ENCODE measurements at regions of chr1 and their contacts with region 1.

Region 1: DNA sequence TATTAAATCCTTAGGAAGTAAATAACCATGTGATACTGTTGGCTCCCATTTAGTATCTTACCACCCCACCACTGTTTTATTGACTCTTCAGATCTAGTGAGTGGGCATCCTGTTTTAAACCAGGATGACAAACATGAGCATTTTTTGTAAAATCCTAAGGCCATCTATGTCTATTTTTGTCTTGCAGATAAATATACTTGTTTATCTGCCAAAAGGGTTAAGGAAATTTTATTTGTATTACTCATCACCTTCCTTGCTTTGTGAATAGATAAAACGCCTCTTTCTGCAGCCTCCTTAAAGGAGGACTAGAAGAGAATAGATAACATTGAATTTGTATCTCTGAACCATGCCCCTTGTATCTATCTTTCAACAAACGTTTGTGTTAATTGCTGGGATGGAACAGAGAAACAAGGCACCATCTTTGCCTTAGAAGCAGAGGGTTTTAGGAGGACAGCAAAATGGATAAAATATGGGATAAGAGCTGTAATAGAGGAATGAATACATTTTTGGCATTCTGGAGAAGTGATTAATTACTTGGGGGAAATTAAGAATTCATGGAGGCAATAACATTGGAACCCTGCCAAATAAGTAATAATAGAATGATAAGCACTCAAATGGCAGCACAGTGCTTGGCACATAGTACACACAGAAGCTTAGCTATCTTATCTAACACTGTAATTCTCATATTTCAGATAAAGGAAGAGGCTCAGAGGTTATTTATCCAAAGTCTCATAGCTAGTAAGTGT is 14.7 kb downstream of the YTHDF2 start:
- DNase-seq: no peak
- ATAC-seq: no peak
- H3K4me3 ChIP-seq: no peak overlapping the region
- H3K4me3 Mint-ChIP-seq: no peak overlapping the region
- H3K27ac ChIP-seq: no peak overlapping the region
- H3K27ac Mint-ChIP-seq: no peak overlapping the region
- H3K4me1 ChIP-seq: peaks cover 23 to 33% of the 10 kb centered on the region in 2 donors
- H3K4me1 Mint-ChIP-seq: peaks cover 43% of the 10 kb centered on the region
- H3K27me3 ChIP-seq: no peaks in the 10 kb centered on the region
- H3K27me3 Mint-ChIP-seq: no peaks in the 10 kb centered on the region
- CTCF ChIP-seq: no peak

Region 2: GRCh38 chr1:28537457-28538199 is 213.9 kb before region 1 on chr1:
- CTCF ChIA-PET with region 1: no interaction called
- POLR2A ChIA-PET with region 1: no interaction called
- intact Hi-C with region 1: no loop called
- DNase-seq: no peak
- ATAC-seq: no peak
- H3K4me3 ChIP-seq: no peak overlapping the region
- H3K4me3 Mint-ChIP-seq: no peak overlapping the region
- H3K27ac ChIP-seq: no peak overlapping the region
- H3K27ac Mint-ChIP-seq: no peak overlapping the region
- H3K4me1 ChIP-seq: no peaks in the 10 kb centered on the region
- H3K4me1 Mint-ChIP-seq: no peaks in the 10 kb centered on the region
- H3K27me3 ChIP-seq: no peaks in the 10 kb centered on the region
- H3K27me3 Mint-ChIP-seq: no peaks in the 10 kb centered on the region
- CTCF ChIP-seq: no peak

Region 3: GRCh38 chr1:28668191-28668955 is 83.1 kb before region 1 on chr1 and contains the start of gene GMEB1:
- CTCF ChIA-PET with region 1: no interaction called
- POLR2A ChIA-PET with region 1: no interaction called
- intact Hi-C with region 1: no loop called
- DNase-seq: peak; percentile 88
- ATAC-seq: peak; percentile 65
- H3K4me3 ChIP-seq: peak within 1 kb of the TSS; percentile 68 to 95 (median 94)
- H3K4me3 Mint-ChIP-seq: peak within 1 kb of the TSS; percentile 94
- H3K27ac ChIP-seq: peak within 1 kb of the TSS; percentile 95 to 98
- H3K27ac Mint-ChIP-seq: peak within 1 kb of the TSS; percentile 99
- H3K4me1 ChIP-seq: peaks cover 5 to 24% of the 10 kb centered on the region in 2 donors
- H3K4me1 Mint-ChIP-seq: peaks cover 19% of the 10 kb centered on the region
- H3K27me3 ChIP-seq: no peaks in the 10 kb centered on the region
- H3K27me3 Mint-ChIP-seq: no peaks in the 10 kb centered on the region
- CTCF ChIP-seq: no peak
- total RNA-seq, gene GMEB1: 21.7 and 24.8 TPM in 2 replicates

Region 4: DNA sequence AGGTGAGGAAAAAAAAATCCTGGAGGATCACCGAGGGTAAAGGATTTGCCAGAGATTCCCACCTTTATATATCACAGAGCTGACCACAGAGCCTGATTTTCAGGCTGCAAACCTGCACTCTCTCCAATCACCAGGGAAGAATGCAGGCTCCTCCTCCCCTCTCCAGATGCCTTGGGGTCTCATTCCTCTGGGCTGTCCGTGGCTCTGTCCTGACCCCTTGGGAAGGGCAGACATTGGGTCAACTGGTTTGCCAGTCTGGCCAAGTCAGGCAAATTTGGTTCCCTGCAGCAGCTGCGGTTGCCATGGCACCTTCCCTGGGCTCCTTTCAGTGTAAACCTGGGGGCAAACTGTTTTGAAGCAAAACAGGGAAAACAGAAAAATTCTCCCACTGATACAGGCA is 48.8 kb after region 1 on chr1:
- CTCF ChIA-PET with region 1: no interaction called
- POLR2A ChIA-PET with region 1: interaction called, 15 read pairs
- intact Hi-C with region 1: no loop called
- DNase-seq: no peak
- ATAC-seq: no peak
- H3K4me3 ChIP-seq: no peak overlapping the region
- H3K4me3 Mint-ChIP-seq: no peak overlapping the region
- H3K27ac ChIP-seq: no peak overlapping the region
- H3K27ac Mint-ChIP-seq: no peak overlapping the region
- H3K4me1 ChIP-seq: no peaks in the 10 kb centered on the region
- H3K4me1 Mint-ChIP-seq: no peaks in the 10 kb centered on the region
- H3K27me3 ChIP-seq: no peaks in the 10 kb centered on the region
- H3K27me3 Mint-ChIP-seq: peaks cover 19% of the 10 kb centered on the region
- CTCF ChIP-seq: no peak

Region 5: DNA sequence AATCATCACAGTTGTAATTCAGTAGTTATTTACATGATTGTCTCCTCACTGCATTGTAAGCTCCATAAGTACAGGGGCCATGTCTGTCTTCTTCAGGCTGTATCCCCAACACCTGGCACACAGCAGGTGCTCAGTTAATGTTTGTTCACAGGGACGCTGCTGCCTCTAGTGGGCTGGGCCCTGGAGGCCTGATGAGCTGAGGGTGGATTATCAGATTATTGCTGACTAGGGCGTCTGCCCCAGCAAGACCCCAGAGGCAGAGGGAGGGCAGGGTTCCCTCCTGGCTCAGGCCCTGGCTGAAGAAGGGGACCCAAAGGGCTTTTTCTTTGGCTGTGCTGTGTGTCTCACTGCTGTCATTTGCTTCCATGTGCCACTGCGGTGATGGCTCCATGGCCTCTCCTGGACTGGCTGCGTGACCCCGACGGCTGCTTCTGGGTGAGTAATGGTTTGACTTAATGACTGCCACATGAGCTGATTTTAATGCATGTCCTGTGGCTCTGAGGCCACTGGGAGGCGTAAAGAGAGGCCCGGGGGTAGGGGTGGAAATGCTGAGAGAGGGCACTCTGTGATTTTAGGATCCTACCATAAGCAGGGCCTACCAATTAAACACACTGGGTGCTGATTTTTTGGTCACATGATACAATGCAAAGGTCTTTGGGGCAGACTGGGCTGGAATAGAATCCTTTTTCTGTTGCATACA is 142.1 kb after region 1 on chr1:
- CTCF ChIA-PET with region 1: no interaction called
- POLR2A ChIA-PET with region 1: no interaction called
- intact Hi-C with region 1: no loop called
- DNase-seq: peak; percentile 36
- ATAC-seq: peak; percentile 49
- H3K4me3 ChIP-seq: no peak overlapping the region
- H3K4me3 Mint-ChIP-seq: no peak overlapping the region
- H3K27ac ChIP-seq: no peak overlapping the region
- H3K27ac Mint-ChIP-seq: peak overlapping the region; percentile 56
- H3K4me1 ChIP-seq: peaks cover 4 to 10% of the 10 kb centered on the region in 2 donors
- H3K4me1 Mint-ChIP-seq: peaks cover 45% of the 10 kb centered on the region
- H3K27me3 ChIP-seq: no peaks in the 10 kb centered on the region
- H3K27me3 Mint-ChIP-seq: no peaks in the 10 kb centered on the region
- CTCF ChIP-seq: peak; percentile 49

Measured in B cell (primary cell).